Prostate gland (tissue), 2 donors: ENCODE measurements at regions of chr16 and their contacts with region 1.

Region 1: DNA sequence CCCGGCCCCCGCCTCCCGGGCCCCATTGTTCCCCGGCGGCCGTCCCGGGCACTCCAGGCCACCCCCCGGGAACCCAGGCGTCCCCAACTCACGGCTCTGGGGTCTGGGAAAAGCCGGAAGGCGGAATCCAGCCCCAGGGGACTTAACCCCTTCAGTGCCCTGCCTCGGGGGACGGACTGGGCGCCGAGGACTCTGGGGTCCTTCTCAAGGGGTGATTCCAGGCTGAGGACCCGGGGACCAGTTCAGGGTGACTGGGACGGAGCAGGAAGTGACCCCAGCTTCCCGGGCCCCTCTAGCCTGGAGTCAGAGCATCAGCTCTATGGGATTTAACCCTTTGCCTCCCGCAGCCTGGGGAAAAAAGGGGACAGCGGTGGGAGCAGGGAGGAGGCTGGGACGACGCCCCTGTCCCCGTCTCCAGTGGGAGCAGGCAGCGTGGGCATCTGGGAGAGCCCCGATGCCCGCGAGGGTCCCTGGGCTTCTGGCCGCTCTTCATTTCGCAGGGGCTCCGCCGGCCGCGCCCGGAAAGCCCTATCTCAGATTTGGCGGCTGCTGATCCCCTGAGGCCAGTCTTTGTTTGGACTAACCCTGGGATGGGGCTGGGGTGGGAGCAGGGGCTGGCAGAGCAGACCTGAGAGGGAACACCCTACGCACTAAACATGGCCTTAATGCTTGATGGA is at the start of gene ZNF629:
- DNase-seq: peak; percentile 55
- H3K4me3 ChIP-seq: peak within 1 kb of the TSS; percentile 67 to 86
- H3K27ac ChIP-seq: peak within 1 kb of the TSS; percentile 79 to 80
- H3K4me1 ChIP-seq: no peaks in the 10 kb centered on the region
- H3K27me3 ChIP-seq: no peaks in the 10 kb centered on the region
- CTCF ChIP-seq: peak in 1 of 4 experiments; percentile 20
- POLR2A ChIP-seq: no peak
- total RNA-seq, gene ZNF629: 17.9 to 24.0 TPM

Region 2: DNA sequence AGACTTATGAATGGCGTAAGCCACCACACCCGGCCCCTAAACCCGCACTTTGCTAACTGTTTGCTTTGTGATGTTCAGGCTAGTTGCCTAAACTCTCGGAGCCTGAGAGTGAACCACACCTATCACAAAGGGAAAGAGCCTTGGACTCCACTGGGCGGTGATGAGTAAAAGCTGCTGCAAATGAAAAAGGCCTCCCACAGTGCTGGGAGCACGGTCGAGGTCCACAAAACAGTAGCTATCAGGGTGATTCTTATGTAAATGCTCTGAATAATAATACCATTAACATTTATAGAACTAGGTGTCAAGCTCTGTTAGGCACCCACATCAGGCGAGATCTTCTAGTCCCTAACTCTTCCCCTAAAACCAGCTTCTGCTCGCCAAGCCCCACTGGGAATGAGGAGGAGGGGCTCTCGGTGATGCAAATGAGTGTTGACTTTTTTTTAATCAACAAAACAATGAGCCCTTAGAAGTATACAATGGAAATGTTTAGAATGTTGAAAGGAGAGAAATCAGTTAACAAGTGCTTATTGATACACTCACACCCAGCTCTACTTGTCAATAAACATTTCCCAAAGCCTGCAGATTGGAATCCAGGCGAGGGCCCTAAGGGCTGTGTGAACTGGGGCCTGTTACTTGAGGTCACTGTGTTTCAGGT is 109.0 kb before region 1 on chr16:
- intact Hi-C with region 1: no loop called
- DNase-seq: no peak
- H3K4me3 ChIP-seq: no peak overlapping the region
- H3K27ac ChIP-seq: no peak overlapping the region
- H3K4me1 ChIP-seq: no peaks in the 10 kb centered on the region
- H3K27me3 ChIP-seq: no peaks in the 10 kb centered on the region
- CTCF ChIP-seq: no peak
- POLR2A ChIP-seq: no peak

Region 3: DNA sequence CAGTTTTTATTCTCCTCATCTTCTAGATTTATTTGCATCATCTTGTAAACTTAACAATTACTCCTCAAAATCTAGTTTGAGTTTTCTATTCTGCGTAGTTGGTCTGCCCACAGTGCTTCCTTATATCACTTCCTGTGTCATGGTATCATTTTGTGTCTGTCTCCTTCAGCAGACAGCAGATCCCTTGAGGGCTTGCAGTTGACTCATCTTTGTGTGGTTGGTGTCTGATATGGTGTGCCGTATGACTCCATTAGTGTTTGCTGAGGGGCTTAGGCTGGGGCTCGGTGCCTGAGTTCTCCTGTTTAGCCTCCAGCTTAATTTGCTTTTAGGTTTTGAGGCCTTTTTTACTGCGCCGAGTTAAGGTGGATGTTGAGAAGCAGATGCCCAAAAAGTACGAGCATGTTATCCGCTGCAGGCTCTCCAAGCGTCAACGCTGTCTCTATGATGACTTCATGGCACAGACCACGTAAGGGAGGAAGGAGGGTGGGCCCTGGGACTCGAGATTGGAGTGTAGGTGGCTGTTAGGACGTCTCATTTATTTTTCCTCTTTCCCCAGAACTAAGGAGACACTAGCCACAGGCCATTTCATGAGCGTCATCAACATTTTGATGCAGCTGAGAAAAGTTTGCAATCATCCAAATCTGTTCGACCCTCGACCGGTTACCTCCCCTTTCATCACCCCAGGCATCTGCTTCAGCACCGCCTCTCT is 71.2 kb before region 1 on chr16:
- intact Hi-C with region 1: no loop called
- DNase-seq: no peak
- H3K4me3 ChIP-seq: no peak overlapping the region
- H3K27ac ChIP-seq: no peak overlapping the region
- H3K4me1 ChIP-seq: no peaks in the 10 kb centered on the region
- H3K27me3 ChIP-seq: no peaks in the 10 kb centered on the region
- CTCF ChIP-seq: no peak
- POLR2A ChIP-seq: no peak

Region 4: GRCh38 chr16:30884760-30885159 is 97.7 kb after region 1 on chr16:
- intact Hi-C with region 1: loop called (anchors 5 kb)
- DNase-seq: no peak
- H3K4me3 ChIP-seq: no peak overlapping the region
- H3K27ac ChIP-seq: no peak overlapping the region
- H3K4me1 ChIP-seq: no peaks in the 10 kb centered on the region
- H3K27me3 ChIP-seq: no peaks in the 10 kb centered on the region
- CTCF ChIP-seq: no peak
- POLR2A ChIP-seq: no peak